ENCODE measurements at regions of chr12 and their contacts with region 1.

Region 1: DNA sequence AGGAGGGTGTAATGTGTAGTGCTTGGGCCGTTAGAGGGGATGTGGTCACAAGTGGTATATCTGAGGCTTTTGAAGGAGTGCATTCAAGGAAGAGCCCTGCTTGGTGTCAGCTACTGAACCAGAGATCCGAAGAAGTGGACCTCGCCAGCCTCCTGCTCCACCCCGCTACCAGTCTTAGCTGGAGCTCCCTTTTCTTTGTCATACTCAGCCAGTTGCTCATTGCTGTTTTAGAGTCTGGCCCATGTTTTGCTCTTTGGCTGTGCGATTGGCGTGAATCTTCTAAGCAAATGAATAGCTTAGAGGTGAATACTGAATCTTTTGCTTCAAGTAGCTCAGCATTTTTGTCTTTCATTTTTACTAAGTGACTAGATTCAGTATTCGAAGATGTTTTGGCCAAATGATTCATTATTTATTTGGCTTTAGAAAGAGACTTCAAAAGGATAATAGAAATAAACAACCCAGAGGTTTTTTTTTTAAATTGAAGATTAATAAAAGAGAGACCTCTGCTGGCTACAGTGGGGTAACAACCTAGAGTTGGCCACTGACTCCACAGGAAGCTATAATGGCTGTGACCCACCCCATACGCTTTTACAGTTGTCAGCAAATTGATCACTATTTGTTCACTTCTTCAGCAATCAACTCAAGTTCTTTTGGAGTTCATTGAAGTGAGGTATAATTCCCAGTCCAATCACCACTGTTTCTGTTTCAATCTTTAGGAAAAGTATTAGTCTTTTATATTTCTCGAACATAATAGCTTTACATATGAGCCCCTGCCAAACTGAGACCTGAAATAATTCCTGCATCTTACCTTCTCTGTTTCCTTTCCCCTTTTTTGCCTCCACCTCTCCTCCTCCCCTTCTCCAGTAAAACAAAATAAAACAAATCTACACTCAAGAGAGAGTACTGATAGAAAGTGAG is 19.9 kb downstream of the CDKN1B start:
- H3K4me3 ChIP-seq: no peak overlapping the region
- H3K27ac ChIP-seq: peak overlapping the region; percentile 53
- H3K4me1 ChIP-seq: peaks cover 32% of the 10 kb centered on the region
- CTCF ChIP-seq: no peak

Region 2: GRCh38 chr12:12376646-12377448 is 360.2 kb before region 1 on chr12:
- CTCF ChIA-PET with region 1: interaction called, 10 read pairs
- POLR2A ChIA-PET with region 1: no interaction called
- H3K4me3 ChIP-seq: no peak overlapping the region
- H3K27ac ChIP-seq: no peak overlapping the region
- H3K4me1 ChIP-seq: no peaks in the 10 kb centered on the region
- CTCF ChIP-seq: peak; percentile 46

Region 3: DNA sequence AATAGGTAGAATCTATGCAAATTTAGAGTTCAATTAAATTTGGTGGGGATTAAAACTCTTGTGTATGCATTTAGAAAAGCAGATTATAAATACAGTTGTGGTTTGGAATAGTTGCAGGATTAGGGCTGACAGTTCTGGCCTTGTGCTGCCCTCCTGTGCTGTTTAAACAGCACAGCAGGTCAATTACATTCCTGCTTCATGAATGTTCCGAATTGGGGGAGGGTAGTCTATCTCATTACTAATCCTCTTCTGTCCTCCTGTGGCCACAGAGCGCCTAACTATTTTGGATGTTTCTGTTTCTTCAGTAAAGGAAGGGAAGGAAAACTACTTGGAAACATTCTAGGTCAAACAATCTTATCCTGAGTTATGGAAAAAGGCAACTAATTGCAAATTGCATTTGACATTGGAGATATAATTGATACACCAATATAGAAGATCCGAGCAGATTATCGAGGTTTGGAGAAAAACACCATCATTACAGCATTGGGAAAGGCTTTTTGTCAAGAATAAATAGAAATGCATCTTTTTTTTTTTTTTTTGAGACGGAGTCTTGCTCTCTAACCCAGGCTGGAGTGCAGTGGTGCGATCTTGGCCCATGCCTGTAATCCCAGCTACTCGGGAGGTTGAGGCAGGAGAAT is 32.3 kb before region 1 on chr12:
- CTCF ChIA-PET with region 1: interaction called, 20 read pairs
- POLR2A ChIA-PET with region 1: no interaction called
- H3K4me3 ChIP-seq: no peak overlapping the region
- H3K27ac ChIP-seq: no peak overlapping the region
- H3K4me1 ChIP-seq: peaks cover 8% of the 10 kb centered on the region
- CTCF ChIP-seq: peak; percentile 98

Region 4: GRCh38 chr12:12716793-12717585 is 20.0 kb before region 1 on chr12 and contains the start of gene CDKN1B:
- CTCF ChIA-PET with region 1: interaction called, 51 read pairs
- POLR2A ChIA-PET with region 1: interaction called, 52 read pairs
- H3K4me3 ChIP-seq: peak within 1 kb of the TSS; percentile 98
- H3K27ac ChIP-seq: peak within 1 kb of the TSS; percentile 99
- H3K4me1 ChIP-seq: peaks cover 32% of the 10 kb centered on the region
- CTCF ChIP-seq: no peak

Region 5: DNA sequence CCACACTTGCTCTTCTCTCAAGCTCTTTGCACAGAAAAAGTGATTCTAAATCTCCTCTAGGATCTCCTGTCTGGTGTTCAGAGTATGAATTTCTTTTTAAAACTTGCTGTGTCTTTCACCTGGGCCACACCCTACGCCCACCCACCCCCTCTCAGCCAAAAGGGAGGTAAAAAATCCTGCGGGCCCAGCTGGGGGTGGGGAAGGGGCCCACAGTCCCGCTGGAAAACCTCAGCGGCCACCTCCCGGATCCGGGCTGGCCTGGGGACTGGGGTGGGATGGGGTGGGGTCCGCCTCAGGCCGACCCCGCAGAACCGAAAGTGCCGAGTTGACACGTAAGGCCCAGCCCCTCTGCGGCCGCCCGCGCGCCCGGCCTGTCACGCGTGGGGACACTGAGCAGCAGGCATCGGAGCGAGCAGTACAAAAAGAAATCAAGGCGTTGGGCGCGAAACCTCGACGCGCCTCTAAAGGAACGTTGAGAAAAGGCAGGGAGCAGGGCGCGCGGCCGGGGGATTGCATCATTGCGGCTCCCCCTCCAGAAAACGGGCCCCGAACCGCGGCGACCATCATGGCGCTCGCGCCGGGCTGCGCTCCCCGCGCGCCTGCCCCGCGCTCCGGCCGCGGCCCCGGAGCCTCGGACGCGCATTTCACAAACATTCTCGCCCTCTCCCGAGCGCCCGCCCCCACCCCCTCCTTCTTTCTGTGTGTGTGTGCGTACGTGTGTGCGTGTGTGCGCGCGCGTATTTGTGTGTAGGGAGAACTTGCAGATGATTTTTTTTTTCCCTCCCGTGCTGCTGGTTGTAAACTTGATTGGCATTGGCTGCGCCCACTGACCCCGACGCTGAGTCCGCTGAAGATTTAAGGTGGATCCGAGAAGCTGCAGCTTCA is 12.1 kb before region 1 on chr12:
- CTCF ChIA-PET with region 1: interaction called, 51 read pairs
- POLR2A ChIA-PET with region 1: interaction called, 52 read pairs
- H3K4me3 ChIP-seq: peak overlapping the region; percentile 67
- H3K27ac ChIP-seq: peak overlapping the region; percentile 100
- H3K4me1 ChIP-seq: peaks cover 23% of the 10 kb centered on the region
- CTCF ChIP-seq: no peak

Region 6: GRCh38 chr12:12755923-12756322 is 18.9 kb after region 1 on chr12:
- CTCF ChIA-PET with region 1: interaction called, 10 read pairs
- POLR2A ChIA-PET with region 1: interaction called, 3 read pairs
- H3K4me3 ChIP-seq: no peak overlapping the region
- H3K27ac ChIP-seq: no peak overlapping the region
- H3K4me1 ChIP-seq: no peaks in the 10 kb centered on the region
- CTCF ChIP-seq: no peak

Measured in HEK293 (cell line).